Caco-2 (cell line): ENCODE measurements at regions of chr13 and their contacts with region 1.

Region 1: GRCh38 chr13:60163478-60164233 is at the start of gene DIAPH3:
- DNase-seq: peak; percentile 97 to 98
- H3K4me3 ChIP-seq: peak within 1 kb of the TSS; percentile 87
- H3K4me3 Mint-ChIP-seq: peak within 1 kb of the TSS; percentile 91
- H3K27ac Mint-ChIP-seq: peak within 1 kb of the TSS; percentile 86
- H3K4me1 ChIP-seq: peaks cover 54% of the 10 kb centered on the region
- H3K4me1 Mint-ChIP-seq: peaks cover 51% of the 10 kb centered on the region
- H3K27me3 ChIP-seq: no peaks in the 10 kb centered on the region
- H3K27me3 Mint-ChIP-seq: no peaks in the 10 kb centered on the region
- CTCF ChIP-seq: no peak
- total RNA-seq, gene DIAPH3: 59.4 and 60.6 TPM in 2 replicates

Region 2: DNA sequence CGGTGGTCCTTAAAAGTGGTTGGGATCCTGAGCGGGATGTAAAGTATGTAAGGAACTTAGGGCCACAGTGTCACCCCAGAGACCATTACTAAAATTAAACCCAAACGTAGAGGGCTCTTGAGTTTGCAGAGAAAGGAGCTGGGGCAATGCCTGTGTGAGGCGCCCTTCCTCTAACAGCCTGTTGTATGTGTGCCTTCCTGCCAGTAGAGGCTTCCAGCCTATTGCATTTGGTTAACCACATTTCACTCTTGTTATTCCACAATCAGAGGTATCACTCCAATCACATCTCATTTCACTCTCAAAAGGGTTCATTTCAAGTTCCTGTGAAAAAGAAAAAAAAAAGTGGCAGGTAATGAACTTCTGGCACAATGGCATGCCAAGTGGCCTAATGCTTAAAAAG is 29.3 kb before region 1 on chr13:
- CTCF ChIA-PET with region 1: no interaction called
- POLR2A ChIA-PET with region 1: interaction called, 5 read pairs
- intact Hi-C with region 1: loop called (anchors 1 kb)
- DNase-seq: no peak
- H3K4me3 ChIP-seq: no peak overlapping the region
- H3K4me3 Mint-ChIP-seq: no peak overlapping the region
- H3K27ac Mint-ChIP-seq: no peak overlapping the region
- H3K4me1 ChIP-seq: peaks cover 33% of the 10 kb centered on the region
- H3K4me1 Mint-ChIP-seq: peaks cover 33% of the 10 kb centered on the region
- H3K27me3 ChIP-seq: no peaks in the 10 kb centered on the region
- H3K27me3 Mint-ChIP-seq: no peaks in the 10 kb centered on the region
- CTCF ChIP-seq: no peak

Region 3: GRCh38 chr13:60143775-60144174 is 19.9 kb before region 1 on chr13:
- CTCF ChIA-PET with region 1: no interaction called
- POLR2A ChIA-PET with region 1: interaction called, 5 read pairs
- intact Hi-C with region 1: loop called (anchors 1 kb)
- DNase-seq: no peak
- H3K4me3 ChIP-seq: no peak overlapping the region
- H3K4me3 Mint-ChIP-seq: no peak overlapping the region
- H3K27ac Mint-ChIP-seq: no peak overlapping the region
- H3K4me1 ChIP-seq: peaks cover 76% of the 10 kb centered on the region
- H3K4me1 Mint-ChIP-seq: peaks cover 45% of the 10 kb centered on the region
- H3K27me3 ChIP-seq: no peaks in the 10 kb centered on the region
- H3K27me3 Mint-ChIP-seq: no peaks in the 10 kb centered on the region
- CTCF ChIP-seq: no peak

Region 4: GRCh38 chr13:60201286-60201685 is 37.6 kb after region 1 on chr13:
- CTCF ChIA-PET with region 1: no interaction called
- POLR2A ChIA-PET with region 1: no interaction called
- intact Hi-C with region 1: loop called (anchors 2 kb)
- DNase-seq: no peak
- H3K4me3 ChIP-seq: no peak overlapping the region
- H3K4me3 Mint-ChIP-seq: no peak overlapping the region
- H3K27ac Mint-ChIP-seq: no peak overlapping the region
- H3K4me1 ChIP-seq: peaks cover 15% of the 10 kb centered on the region
- H3K4me1 Mint-ChIP-seq: peaks cover 15% of the 10 kb centered on the region
- H3K27me3 ChIP-seq: no peaks in the 10 kb centered on the region
- H3K27me3 Mint-ChIP-seq: no peaks in the 10 kb centered on the region
- CTCF ChIP-seq: no peak

Region 5: GRCh38 chr13:60267498-60268198 is 104.0 kb after region 1 on chr13:
- CTCF ChIA-PET with region 1: no interaction called
- POLR2A ChIA-PET with region 1: no interaction called
- intact Hi-C with region 1: loop called (anchors 2 kb)
- DNase-seq: peak; percentile 78 to 81
- H3K4me3 ChIP-seq: peak overlapping the region; percentile 55
- H3K4me3 Mint-ChIP-seq: no peak overlapping the region
- H3K27ac Mint-ChIP-seq: no peak overlapping the region
- H3K4me1 ChIP-seq: peaks cover 39% of the 10 kb centered on the region
- H3K4me1 Mint-ChIP-seq: peaks cover 9% of the 10 kb centered on the region
- H3K27me3 ChIP-seq: no peaks in the 10 kb centered on the region
- H3K27me3 Mint-ChIP-seq: no peaks in the 10 kb centered on the region
- CTCF ChIP-seq: no peak

Region 6: GRCh38 chr13:60396783-60397703 is 233.4 kb after region 1 on chr13 and contains the start of gene TDRD3:
- CTCF ChIA-PET with region 1: interaction called, 3 read pairs
- POLR2A ChIA-PET with region 1: no interaction called
- intact Hi-C with region 1: loop called (anchors 2 kb)
- DNase-seq: peak; percentile 90 to 91
- H3K4me3 ChIP-seq: peak within 1 kb of the TSS; percentile 58
- H3K4me3 Mint-ChIP-seq: peak within 1 kb of the TSS; percentile 91
- H3K27ac Mint-ChIP-seq: peak within 1 kb of the TSS; percentile 85
- H3K4me1 ChIP-seq: peaks cover 25% of the 10 kb centered on the region
- H3K4me1 Mint-ChIP-seq: peaks cover 43% of the 10 kb centered on the region
- H3K27me3 ChIP-seq: no peaks in the 10 kb centered on the region
- H3K27me3 Mint-ChIP-seq: no peaks in the 10 kb centered on the region
- CTCF ChIP-seq: peak; percentile 83 to 94
- total RNA-seq, gene TDRD3: 16.3 and 17.2 TPM in 2 replicates